ENCODE measurements at regions of chr2 and their contacts with region 1.

Region 1: DNA sequence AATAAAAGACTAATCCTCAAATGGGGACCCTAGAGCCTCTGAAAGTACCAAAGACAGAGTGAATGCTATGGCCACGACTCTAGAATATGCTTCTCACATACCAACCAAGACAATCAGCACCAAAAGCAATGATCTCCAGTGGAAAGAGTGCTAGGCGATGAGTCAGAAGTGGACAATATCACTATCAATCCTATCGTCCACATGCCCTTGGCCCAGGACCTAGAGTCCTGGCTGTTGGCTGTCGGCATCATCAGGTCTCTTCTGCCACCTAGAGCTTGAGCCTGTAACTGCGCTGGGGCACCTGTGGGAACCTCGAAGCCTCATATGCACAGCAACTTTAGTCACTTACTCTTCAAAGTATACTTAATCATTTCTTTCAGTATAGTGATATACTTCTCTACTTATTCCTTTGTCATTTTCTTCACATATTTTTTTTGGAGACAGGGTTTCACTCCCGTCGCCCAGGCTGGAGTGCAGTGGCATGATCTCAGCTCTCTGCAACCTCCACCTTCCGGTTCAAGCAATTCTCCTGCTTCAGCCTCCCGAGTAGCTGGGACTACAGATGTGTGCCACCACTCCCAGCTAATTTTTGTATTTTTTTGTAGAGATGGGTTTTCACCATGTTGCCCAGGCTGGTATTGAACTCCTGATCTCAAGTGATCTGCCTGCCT is 29.7 kb downstream of the NOL10 start:
- DNase-seq: peak; percentile 85
- ATAC-seq: peak; percentile 52
- H3K4me3 ChIP-seq: no peak overlapping the region
- H3K27ac ChIP-seq: peak overlapping the region; percentile 83
- H3K4me1 ChIP-seq: peaks cover 43% of the 10 kb centered on the region
- H3K27me3 ChIP-seq: no peaks in the 10 kb centered on the region
- CTCF ChIP-seq: peak; percentile 89

Region 2: GRCh38 chr2:10355471-10356458 is 304.3 kb before region 1 on chr2:
- CTCF ChIA-PET with region 1: no interaction called
- POLR2A ChIA-PET with region 1: no interaction called
- intact Hi-C with region 1: no loop called
- DNase-seq: peak; percentile 11
- ATAC-seq: peak; percentile 25
- H3K4me3 ChIP-seq: no peak overlapping the region
- H3K27ac ChIP-seq: no peak overlapping the region
- H3K4me1 ChIP-seq: peaks cover 5% of the 10 kb centered on the region; the same call in 1 of the 2 replicates
- H3K27me3 ChIP-seq: no peaks in the 10 kb centered on the region
- CTCF ChIP-seq: no peak

Region 3: DNA sequence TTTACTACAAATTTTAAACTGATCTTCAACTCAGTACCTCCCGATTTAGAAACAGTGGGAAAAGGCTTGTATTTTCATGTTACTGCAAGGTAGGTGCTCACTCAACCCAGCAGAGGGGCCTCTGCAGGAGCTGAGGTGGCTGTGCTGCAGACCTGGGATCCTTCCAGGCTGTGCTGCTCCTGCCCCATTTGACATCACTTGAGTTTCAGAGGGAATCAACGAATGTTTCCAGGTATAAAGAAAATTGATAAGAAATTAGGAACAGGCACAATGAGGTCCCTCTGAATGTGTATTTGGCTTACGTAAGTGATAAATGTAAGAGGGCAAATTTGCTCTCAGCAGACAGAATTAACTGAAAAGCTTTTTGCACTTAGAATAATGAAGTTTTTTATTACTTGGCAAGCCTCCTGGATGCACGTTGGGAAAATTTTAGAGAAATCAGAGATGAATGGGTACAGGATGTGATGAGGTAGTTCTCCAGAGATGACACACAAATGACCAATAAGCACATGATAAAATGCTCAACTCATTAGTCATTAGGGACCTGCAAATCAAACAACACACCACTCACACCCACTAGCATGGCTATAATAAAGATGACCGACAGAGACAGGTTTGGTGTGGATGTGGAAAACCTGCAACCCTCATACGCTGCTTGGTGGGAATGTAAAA is 84.3 kb before region 1 on chr2:
- CTCF ChIA-PET with region 1: no interaction called
- POLR2A ChIA-PET with region 1: no interaction called
- intact Hi-C with region 1: loop called (anchors 5 kb)
- DNase-seq: peak; percentile 94
- ATAC-seq: peak; percentile 91
- H3K4me3 ChIP-seq: 0 out of 2 replicates have a peak overlapping the region, but pooled peaks have one; percentile 3
- H3K27ac ChIP-seq: peak overlapping the region; percentile 97
- H3K4me1 ChIP-seq: peaks cover 27% of the 10 kb centered on the region
- H3K27me3 ChIP-seq: no peaks in the 10 kb centered on the region
- CTCF ChIP-seq: no peak

Region 4: DNA sequence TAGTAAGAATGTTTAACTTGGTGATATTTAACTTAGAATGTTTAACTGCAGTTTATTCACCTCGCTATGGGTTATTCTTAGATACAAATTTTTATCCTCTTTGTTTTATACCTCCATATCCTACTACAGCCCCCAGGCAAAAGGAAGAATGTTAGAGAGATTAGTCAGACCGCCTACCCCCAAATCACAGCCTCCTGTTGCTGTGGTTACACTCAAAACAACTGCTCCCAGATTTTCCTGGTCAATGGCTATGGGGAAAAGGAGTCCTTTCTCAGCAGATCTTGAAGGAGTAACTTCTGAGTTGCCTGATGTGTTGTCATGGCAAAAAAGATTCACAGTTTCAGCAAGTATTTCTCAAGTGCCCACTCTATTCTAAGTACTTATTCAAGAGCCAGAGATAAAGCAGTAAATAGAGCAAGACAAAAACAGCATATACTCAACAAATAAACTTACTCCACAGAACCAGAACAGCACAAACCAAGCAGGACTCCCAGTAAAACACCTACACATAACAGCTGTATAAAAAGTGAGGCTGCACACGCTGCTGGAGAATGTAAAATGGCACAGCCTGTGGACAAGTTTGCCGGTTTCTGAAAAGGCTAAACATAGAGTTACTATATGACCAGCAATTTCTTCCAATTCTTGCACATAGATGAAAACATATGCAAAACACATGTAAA is 75.1 kb before region 1 on chr2:
- CTCF ChIA-PET with region 1: no interaction called
- POLR2A ChIA-PET with region 1: no interaction called
- intact Hi-C with region 1: loop called (anchors 2 kb)
- DNase-seq: peak; percentile 97
- ATAC-seq: peak; percentile 84
- H3K4me3 ChIP-seq: peak overlapping the region; percentile 40
- H3K27ac ChIP-seq: peak overlapping the region; percentile 97
- H3K4me1 ChIP-seq: peaks cover 37% of the 10 kb centered on the region
- H3K27me3 ChIP-seq: no peaks in the 10 kb centered on the region
- CTCF ChIP-seq: no peak

Region 5: DNA sequence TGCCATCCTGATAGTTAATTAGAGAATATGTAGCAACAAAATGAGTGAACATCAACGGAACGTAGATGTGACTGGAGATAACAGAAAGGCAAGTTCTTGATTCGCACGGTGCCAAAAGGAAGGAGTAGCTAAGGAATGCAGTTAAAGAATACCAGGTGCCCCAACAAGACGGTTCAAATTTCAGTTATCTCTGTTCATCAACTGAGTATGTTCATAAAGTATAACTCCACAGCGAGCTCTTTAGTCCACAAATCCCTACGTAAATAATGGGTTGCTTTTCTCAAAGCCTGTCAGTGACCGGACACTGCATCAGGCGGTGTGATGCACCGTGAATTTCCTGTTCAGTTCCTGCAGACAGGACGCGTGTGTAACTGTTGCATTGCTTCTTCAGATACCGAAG is 62.1 kb before region 1 on chr2:
- CTCF ChIA-PET with region 1: interaction called, 3 read pairs
- POLR2A ChIA-PET with region 1: no interaction called
- intact Hi-C with region 1: loop called (anchors 2 kb)
- DNase-seq: peak; percentile 94
- ATAC-seq: peak; percentile 90
- H3K4me3 ChIP-seq: peak overlapping the region; percentile 52
- H3K27ac ChIP-seq: peak overlapping the region; percentile 90
- H3K4me1 ChIP-seq: peaks cover 39% of the 10 kb centered on the region
- H3K27me3 ChIP-seq: no peaks in the 10 kb centered on the region
- CTCF ChIP-seq: no peak